Breast epithelium (tissue), 4 donors: ENCODE measurements at regions of chr9 and their contacts with region 1.

Region 1: DNA sequence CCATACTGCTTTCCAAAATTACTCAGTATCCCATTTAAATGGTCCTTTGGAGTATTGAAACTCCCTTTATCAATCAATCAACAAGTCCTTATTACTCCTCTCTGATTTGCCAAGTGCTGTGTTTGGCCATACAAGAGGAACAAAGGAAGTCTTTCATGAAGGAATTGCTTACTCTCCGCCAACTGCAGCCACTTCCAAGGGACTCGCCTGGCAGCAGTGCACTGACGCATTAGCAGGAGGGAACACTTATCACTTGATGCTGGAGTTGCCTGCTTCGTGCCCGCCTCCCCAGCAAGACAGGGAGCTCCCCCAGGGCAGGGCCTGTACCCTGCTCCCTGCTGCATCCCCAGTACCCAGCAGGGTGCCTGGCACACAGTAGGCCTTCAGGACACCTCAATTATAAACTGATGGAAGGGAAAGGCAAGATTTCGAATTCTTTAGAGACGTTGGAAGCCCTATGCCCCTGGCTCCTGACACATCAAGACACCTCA is 97.9 kb downstream of the CRB2 start:
- DNase-seq: peak in 1 of 2 donors; percentile 61
- H3K4me3 ChIP-seq: no peak overlapping the region
- H3K27ac ChIP-seq: no peak overlapping the region
- H3K4me1 ChIP-seq: no peaks in the 10 kb centered on the region
- H3K27me3 ChIP-seq: no peaks in the 10 kb centered on the region
- CTCF ChIP-seq: no peak
- POLR2A ChIP-seq: no peak

Region 2: GRCh38 chr9:122219856-122220672 is 1233.8 kb before region 1 on chr9:
- intact Hi-C with region 1: loop called (anchors 5 kb)
- DNase-seq: no peak
- H3K4me3 ChIP-seq: peak overlapping the region; percentile 3 to 61 (median 32)
- H3K27ac ChIP-seq: no peak overlapping the region
- H3K4me1 ChIP-seq: peaks cover 12 to 14% of the 10 kb centered on the region in 2 donors
- H3K27me3 ChIP-seq: peaks cover 0 to 84% of the 10 kb centered on the region in 2 donors
- CTCF ChIP-seq: no peak
- POLR2A ChIP-seq: no peak